ENCODE measurements at regions of chr10 and their contacts with region 1.

Region 1: GRCh38 chr10:30591249-30591670 is 38.3 kb downstream of the LYZL2 start:
- DNase-seq: no peak
- H3K4me3 ChIP-seq: no peak overlapping the region
- CTCF ChIP-seq: peak; percentile 67

Region 2: GRCh38 chr10:29998142-29998808 is 593.0 kb before region 1 on chr10:
- CTCF ChIA-PET with region 1: interaction called, 12 read pairs
- POLR2A ChIA-PET with region 1: no interaction called
- DNase-seq: no peak
- H3K4me3 ChIP-seq: no peak overlapping the region
- CTCF ChIP-seq: peak; percentile 96

Region 3: DNA sequence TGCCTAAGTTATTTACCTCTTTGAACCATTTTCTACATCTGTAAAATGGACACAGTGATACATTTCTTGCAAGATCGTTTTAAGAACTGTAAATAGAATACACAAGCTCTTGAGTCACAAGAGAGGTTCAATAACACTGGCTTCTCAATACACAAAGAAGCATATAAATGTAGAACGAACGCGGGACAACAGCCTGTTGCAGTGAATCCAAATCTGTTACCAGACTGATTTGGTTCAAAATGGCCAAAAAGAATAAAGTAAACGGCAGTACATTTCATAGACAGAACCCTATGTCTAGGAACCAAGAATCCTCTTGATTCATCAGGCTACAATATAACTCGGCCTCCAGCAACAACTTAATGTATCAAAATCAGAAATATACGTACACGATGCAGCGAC is 242.9 kb before region 1 on chr10:
- CTCF ChIA-PET with region 1: interaction called, 13 read pairs
- POLR2A ChIA-PET with region 1: no interaction called
- DNase-seq: no peak
- H3K4me3 ChIP-seq: peak overlapping the region; percentile 91
- CTCF ChIP-seq: no peak

Region 4: DNA sequence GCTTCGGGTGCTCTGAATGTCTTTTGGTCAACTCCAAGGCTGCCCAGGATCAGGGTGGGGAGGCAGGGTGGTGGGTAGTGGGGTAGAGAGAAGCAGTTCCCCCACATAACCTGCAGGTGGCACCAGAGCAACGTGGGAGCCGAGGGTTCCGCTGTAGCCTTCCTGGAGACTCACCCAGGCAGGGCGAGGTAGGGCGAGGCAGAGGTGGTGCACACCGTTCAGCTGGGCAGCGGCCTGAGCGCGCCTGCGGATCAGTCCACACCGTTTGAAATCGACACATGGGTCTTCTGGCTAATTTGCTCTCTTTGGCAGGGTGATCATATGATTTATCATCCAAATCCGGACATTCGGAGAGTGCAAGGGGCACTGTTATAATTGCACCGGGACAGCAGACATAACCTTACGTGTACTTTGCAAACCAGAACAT is 198.7 kb before region 1 on chr10:
- CTCF ChIA-PET with region 1: interaction called, 222 read pairs
- POLR2A ChIA-PET with region 1: no interaction called
- DNase-seq: no peak
- H3K4me3 ChIP-seq: no peak overlapping the region
- CTCF ChIP-seq: peak; percentile 95

Region 5: DNA sequence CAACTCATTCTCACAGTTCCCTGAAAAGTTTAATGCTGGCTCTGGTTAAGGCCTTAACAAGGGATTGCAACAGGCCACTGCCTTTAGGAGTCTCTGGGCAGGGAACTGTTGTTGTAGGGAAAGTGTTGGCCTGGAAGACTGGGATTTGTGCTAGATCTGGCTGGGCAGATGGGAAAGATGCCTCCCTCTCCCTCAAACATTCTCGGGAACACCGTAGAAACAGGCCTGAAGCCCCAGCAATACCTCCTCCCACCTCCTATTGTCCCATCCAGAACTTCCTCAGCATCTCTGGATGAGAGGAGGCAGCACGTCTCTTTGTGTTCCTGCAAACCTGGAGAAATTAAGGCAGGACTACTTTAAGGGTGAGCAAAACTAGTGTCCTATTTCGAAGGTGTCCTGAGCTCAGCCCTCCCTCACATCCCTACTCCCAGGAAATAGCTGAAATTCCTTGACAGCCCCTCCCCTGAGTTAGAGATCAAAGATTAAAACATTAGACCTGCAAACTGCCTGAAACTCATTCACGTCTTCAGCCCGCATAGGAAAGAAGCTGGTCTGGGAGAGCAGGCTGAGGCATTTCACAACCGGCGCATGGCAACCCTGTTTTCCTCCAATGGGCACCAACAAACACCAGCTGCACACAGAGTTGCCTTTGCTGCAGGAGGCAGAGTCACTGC is 168.1 kb before region 1 on chr10:
- CTCF ChIA-PET with region 1: interaction called, 28 read pairs
- POLR2A ChIA-PET with region 1: no interaction called
- DNase-seq: no peak
- H3K4me3 ChIP-seq: no peak overlapping the region
- CTCF ChIP-seq: no peak

Region 6: GRCh38 chr10:30456266-30456665 is 135.0 kb before region 1 on chr10:
- CTCF ChIA-PET with region 1: no interaction called
- POLR2A ChIA-PET with region 1: no interaction called
- DNase-seq: no peak
- H3K4me3 ChIP-seq: no peak overlapping the region
- CTCF ChIP-seq: no peak

Region 7: GRCh38 chr10:30606313-30606712 is 15.1 kb after region 1 on chr10:
- CTCF ChIA-PET with region 1: interaction called, 21 read pairs
- POLR2A ChIA-PET with region 1: no interaction called
- DNase-seq: no peak
- H3K4me3 ChIP-seq: no peak overlapping the region
- CTCF ChIP-seq: no peak

Region 8: DNA sequence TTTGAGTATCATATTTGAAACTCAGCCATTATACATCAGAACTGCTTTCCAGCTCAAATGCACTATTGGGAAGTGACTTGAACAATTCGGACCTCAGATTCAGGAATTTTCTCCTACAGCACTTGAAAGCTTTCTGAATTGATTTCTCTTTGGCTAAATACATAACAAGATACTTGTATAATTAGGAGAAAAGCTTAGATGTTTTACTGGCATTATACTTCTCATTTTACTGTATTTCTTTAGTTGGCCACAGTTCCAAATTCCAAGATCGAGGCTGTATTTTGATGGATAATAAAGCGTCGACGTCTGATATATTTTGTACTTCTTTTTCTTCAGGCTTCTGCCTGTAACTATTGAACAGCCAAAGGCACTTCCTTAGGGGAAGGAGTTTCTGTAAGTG is 65.0 kb after region 1 on chr10:
- CTCF ChIA-PET with region 1: no interaction called
- POLR2A ChIA-PET with region 1: no interaction called
- DNase-seq: no peak
- H3K4me3 ChIP-seq: no peak overlapping the region
- CTCF ChIP-seq: no peak

Region 9: DNA sequence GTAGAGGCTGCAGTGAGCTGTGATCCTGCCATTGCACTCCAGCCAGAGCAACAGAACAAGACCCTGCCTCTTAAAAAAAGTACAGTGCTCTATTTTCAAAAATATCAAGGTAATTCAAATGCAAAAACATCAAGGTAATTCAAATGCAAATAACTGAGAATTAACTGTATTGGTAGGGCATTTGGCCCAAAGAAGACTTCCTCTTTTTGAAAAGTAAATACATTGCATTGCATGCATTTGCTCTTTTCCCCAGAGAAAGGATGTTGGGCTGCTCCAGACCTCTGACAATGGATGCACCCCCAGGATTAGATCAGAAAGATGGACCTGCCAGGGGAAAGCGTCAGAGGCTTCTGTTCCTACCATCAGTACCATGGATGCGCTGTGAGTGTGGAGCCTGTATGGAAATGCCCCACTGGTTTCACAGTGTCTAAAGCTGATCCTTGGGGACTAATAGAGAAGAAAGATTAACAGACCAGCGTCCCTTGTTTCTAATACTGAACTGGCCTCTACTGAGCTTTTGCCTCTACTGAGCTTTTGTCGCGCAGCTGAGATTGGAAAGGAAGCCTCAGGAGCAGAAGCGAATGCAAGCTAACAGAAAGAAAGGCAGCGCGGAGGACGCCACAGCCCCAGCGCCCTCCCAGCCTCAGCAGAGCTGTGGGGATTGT is 131.8 kb after region 1 on chr10:
- CTCF ChIA-PET with region 1: no interaction called
- POLR2A ChIA-PET with region 1: no interaction called
- DNase-seq: no peak
- H3K4me3 ChIP-seq: no peak overlapping the region
- CTCF ChIP-seq: no peak

Region 10: DNA sequence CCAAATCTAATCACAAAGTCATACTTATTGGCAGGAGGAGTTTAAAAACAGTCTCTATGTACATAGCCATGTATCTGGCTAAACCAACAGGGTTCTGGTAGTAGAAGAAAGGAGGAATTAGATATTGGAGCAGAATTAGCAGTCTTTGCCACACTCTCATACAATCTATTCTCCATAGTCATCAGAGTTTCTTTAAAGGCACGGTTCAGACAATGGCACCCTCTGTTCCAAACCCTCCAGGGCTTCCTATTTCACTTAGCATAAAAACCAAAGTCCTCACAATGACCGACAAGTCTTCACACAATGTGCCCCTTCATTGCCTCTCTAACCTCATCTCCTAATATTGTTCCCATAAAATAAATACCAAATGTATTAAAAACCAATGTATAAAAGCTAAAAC is 427.7 kb after region 1 on chr10:
- CTCF ChIA-PET with region 1: no interaction called
- POLR2A ChIA-PET with region 1: no interaction called
- DNase-seq: no peak
- H3K4me3 ChIP-seq: no peak overlapping the region
- CTCF ChIP-seq: no peak